ENCODE measurements at regions of chr12 and their contacts with region 1.

Region 1: DNA sequence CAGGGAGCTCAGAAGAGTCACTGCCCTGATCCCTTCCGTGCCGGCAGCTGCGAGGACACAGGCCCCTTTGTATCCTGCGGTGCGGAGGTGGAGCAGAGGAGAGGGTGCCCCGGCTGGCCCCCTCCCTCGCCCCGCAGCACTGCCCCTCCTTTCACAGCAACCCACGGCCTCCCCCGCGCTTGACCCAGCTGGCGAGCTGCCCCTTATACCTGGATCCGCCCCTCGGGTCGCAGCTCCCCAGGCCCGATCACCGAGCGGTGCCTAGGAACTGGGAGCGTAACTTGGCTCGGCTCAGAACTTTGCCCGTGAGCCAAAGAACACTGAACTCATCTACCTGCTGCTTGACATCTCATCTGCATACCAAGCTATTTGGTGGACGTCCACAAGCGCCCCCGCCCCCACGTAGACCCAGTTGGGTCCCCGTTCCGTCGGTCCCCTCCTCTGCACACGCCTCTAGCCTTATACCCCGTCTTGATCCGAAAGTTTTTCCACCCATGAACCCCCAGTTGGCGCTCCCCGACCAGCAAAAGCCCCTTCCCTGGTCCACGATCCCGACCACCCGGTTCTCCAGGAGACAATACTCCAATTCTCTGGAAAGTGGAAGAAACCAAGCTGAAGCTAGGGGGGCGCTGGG is 697 bp upstream of the DNAJC14 start:
- DNase-seq: peak; percentile 55
- ATAC-seq: peak; percentile 35
- H3K4me3 Mint-ChIP-seq: peak overlapping the region; percentile 99
- H3K27ac Mint-ChIP-seq: peak overlapping the region; percentile 97
- H3K4me1 Mint-ChIP-seq: peaks cover 41% of the 10 kb centered on the region
- H3K27me3 Mint-ChIP-seq: no peaks in the 10 kb centered on the region

Region 2: DNA sequence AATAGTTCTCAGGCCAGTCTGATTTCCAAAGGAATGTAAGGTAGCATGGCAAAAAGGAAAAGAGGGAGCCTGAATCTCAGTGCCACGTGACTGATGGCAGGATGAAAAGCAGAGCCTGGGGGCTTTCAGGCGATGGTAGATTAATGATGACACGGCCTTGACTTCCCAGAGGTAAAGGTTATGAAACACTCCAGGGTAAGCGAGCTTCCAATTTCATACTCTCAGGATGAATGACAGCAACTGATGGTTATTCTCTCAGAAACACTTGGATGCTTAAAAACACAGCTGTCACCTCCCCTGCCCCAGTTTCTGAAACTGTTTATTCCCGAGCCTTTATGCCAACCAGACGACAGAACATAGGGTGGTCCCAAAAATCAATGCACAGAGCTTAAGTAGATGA is 58.3 kb before region 1 on chr12:
- CTCF ChIA-PET with region 1: no interaction called
- POLR2A ChIA-PET with region 1: no interaction called
- DNase-seq: no peak
- ATAC-seq: no peak
- H3K4me3 Mint-ChIP-seq: no peak overlapping the region
- H3K27ac Mint-ChIP-seq: no peak overlapping the region
- H3K4me1 Mint-ChIP-seq: peaks cover 3% of the 10 kb centered on the region
- H3K27me3 Mint-ChIP-seq: no peaks in the 10 kb centered on the region

Region 3: GRCh38 chr12:55940065-55940732 is 110.1 kb after region 1 on chr12:
- CTCF ChIA-PET with region 1: interaction called, 14 read pairs
- POLR2A ChIA-PET with region 1: interaction called, 6 read pairs
- DNase-seq: peak; percentile 90
- ATAC-seq: peak; percentile 93
- H3K4me3 Mint-ChIP-seq: no peak overlapping the region
- H3K27ac Mint-ChIP-seq: peak overlapping the region; percentile 69
- H3K4me1 Mint-ChIP-seq: peaks cover 67% of the 10 kb centered on the region
- H3K27me3 Mint-ChIP-seq: no peaks in the 10 kb centered on the region

Region 4: DNA sequence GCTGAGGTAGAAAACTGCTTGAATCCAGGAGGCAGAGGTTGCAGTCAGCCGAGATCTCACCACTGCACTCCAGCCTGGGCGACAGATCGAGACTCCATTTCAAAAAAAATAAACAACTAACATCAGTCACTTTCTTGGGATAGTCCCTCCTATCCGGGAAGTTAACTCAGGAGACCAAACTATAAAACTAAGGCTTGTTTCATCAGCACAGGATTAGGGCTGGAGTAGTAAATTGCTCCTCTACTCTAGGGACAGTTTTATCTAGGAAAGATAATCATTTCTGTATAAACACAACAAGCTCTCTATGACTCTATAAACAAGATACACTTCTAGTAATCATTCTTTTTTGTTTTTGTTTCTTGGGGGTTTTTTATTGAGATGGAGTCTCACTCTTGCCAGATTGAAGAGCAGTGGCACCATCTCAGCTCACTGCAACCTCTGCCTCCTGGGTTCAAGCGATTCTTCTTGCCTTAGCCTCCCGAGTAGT is 223.4 kb after region 1 on chr12:
- CTCF ChIA-PET with region 1: no interaction called
- POLR2A ChIA-PET with region 1: no interaction called
- DNase-seq: no peak
- ATAC-seq: no peak
- H3K4me3 Mint-ChIP-seq: no peak overlapping the region
- H3K27ac Mint-ChIP-seq: no peak overlapping the region
- H3K4me1 Mint-ChIP-seq: peaks cover 9% of the 10 kb centered on the region
- H3K27me3 Mint-ChIP-seq: peaks cover 3% of the 10 kb centered on the region

Measured in activated CD8-positive, alpha-beta T cell treated with anti-CD3 and anti-CD28 coated beads, Interleukin-2, amount 10 ng/mL, durations not matched to agents 7 days and 5 days (primary cell).